AG04450 (cell line): ENCODE measurements at regions of chr9 and their contacts with region 1.

Region 1: GRCh38 chr9:70484210-70485130 is 70.0 kb upstream of the KLF9 start:
- DNase-seq: peak; percentile 43
- H3K4me3 ChIP-seq: no peak overlapping the region
- H3K27ac ChIP-seq: no peak overlapping the region
- H3K27me3 ChIP-seq: no peaks in the 10 kb centered on the region
- CTCF ChIP-seq: peak; percentile 87

Region 2: DNA sequence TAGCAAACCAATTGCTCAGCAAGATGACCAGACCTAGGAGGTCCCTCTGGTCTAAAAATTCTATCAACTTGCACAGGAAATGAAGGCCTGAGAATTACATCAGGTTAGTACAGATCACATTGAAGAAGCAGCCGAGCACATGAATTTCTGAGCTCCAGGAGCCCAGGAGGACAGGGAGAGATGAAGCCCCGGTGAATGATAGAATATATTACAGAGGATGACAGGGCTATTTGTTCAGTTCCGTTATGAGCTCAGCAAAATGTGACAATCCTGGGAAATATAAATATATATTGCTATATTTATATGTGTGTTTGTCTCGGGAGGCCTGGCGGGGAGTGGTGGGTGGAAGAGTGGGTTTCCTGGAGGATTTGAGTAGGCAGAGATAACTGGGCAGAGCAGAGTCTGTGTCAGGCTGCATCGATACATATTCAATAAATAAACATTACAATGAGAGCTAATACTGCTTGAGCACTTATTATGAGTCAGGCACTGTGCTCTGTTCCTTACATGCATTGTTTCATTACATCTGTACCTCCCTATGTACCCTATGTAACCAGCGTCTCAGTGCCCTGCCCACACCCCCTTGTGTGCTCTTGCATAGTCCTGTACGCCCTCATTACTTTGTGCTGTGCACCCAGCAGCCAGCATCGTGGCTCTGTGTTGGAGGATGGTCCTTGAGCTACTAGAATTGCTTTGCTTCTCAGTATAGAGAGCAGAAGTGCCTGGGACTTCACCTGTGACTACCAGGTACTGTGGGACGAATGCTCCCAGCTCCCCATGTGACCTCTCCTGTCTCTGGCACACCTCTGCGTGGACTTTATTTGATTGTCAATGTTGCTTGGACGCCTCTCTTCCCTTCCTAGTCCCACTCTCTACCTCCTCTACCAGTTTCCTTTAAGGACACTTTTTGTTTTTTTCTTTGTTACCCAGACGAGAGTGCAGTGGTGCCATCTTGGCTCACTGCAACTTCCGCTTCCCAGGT is 11.9 kb before region 1 on chr9:
- CTCF ChIA-PET with region 1: interaction called, 10 read pairs
- POLR2A ChIA-PET with region 1: no interaction called
- DNase-seq: no peak
- H3K4me3 ChIP-seq: no peak overlapping the region
- H3K27ac ChIP-seq: no peak overlapping the region
- H3K27me3 ChIP-seq: no peaks in the 10 kb centered on the region
- CTCF ChIP-seq: no peak